Adrenal gland (tissue), 19 donors: ENCODE measurements at regions of chr11 and their contacts with region 1.

Region 1: DNA sequence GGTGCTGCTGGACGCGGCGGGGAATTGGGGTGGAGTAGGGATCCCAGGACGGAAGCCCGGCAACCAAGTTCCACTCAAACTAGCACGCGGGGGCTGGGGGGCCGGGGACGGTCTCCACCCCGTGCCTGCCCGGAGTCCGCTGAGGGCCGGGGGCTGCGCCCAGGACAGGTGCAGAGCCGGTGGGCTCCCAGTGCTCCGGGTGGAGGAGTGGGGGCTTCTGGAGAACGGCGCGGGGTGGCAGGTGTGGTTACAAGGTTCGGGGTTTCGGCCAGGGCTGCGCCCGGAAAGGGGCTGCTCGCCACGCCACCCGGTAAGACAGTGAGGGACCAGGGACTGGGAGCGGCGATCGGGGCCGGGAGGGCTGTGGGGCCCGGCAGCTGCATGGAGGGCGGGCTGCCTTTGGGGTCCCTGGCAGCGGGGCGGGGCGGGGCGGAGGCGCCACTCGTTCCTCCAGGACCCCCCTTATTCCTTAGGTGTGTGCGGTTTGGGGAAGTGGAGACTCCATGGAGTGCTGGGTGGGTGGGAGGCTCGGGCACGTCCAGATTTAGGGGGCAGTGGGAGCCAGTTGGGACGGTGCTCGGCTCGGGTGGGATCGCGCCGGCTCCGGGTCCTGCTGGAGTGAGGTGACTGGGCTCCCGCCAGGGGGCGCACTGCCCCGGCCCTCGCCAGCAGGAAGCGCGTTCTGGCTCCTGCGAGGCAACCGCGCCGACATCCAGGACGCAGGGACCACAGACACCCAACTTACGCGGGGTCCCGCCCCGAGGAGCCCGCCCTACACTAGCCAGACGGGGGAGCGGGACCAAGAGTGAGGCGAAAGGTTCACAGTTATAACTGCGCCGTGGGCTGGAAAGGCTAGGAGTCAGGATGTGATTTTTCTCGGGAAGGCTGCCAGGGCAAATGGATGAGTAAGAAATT is 868 bp downstream of the TSPAN18 start:
- DNase-seq: peak; percentile 81 to 91 (median 88)
- H3K4me3 ChIP-seq: peak overlapping the region in 3 of 4 donors; percentile 73 to 88 (median 74)
- H3K27ac ChIP-seq: peak overlapping the region in 3 of 5 donors; percentile 81 to 96 (median 91)
- H3K4me1 ChIP-seq: peaks cover 46 to 47% of the 10 kb centered on the region in 2 donors
- H3K27me3 ChIP-seq: no peaks in the 10 kb centered on the region
- CTCF ChIP-seq: peak; percentile 82 to 97 (median 94)
- POLR2A ChIP-seq: peak in 1 of 2 donors; percentile 23

Region 2: DNA sequence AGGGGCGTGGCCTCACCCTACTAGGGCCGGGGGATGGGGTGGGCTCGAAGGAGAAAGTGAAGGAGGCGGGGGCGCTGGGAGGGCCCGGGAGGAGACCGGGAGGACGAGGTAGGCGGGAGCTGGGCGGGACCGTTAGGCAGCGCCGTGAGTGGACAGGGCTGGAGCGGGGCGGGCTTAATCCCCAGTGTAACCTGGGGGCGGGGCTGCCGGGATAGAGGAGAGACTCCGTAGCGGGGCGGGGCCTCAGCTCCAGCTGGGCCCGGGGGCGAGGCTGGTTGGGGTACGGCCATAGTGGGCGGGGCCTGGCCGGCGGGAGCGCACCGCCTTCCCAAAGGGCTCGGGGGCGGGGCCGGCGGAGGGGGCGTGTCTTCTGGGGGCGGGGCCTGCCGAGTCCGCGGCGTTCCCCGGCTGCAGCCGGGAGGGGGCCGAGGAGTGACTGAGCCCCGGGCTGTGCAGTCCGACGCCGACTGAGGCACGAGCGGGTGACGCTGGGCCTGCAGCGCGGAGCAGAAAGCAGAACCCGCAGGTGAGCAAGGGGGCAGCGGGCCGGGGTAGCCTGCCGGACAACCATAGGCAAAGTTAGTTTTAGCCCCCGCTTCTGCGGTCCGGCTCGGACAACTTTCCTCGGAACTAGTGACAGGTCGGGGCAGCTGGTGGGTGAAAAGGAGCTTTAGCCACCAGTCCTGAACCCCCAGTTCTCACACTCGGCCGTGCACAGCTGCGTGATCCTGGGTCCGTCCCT is 162.2 kb before region 1 on chr11 and contains the start of gene CD82:
- intact Hi-C with region 1: loop called in 1 of 2 experiments (anchors 10 kb)
- DNase-seq: peak; percentile 100
- H3K4me3 ChIP-seq: peak within 1 kb of the TSS in 3 of 4 donors; percentile 50 to 59 (median 54)
- H3K27ac ChIP-seq: peak within 1 kb of the TSS; percentile 94 to 99 (median 98)
- H3K4me1 ChIP-seq: peaks cover 26 to 39% of the 10 kb centered on the region in 2 donors
- H3K27me3 ChIP-seq: no peaks in the 10 kb centered on the region
- CTCF ChIP-seq: peak in 4 of 6 experiments; percentile 15 to 44 (median 22)
- POLR2A ChIP-seq: peak; percentile 63 to 89
- total RNA-seq, gene CD82: 2.3 to 38.2 (median 20.0) TPM

Region 3: GRCh38 chr11:44621140-44621681 is 106.4 kb before region 1 on chr11:
- intact Hi-C with region 1: loop called in 1 of 2 experiments (anchors 5 kb)
- DNase-seq: peak; percentile 60 to 90 (median 80)
- H3K4me3 ChIP-seq: no peak overlapping the region
- H3K27ac ChIP-seq: no peak overlapping the region
- H3K4me1 ChIP-seq: no peaks in the 10 kb centered on the region
- H3K27me3 ChIP-seq: no peaks in the 10 kb centered on the region
- CTCF ChIP-seq: peak; percentile 97 to 99 (median 98)
- POLR2A ChIP-seq: peak in 1 of 2 donors; percentile 12

Region 4: GRCh38 chr11:44775366-44775984 is 47.8 kb after region 1 on chr11:
- intact Hi-C with region 1: loop called in 1 of 2 experiments (anchors 5 kb)
- DNase-seq: peak; percentile 52 to 83 (median 72)
- H3K4me3 ChIP-seq: no peak overlapping the region
- H3K27ac ChIP-seq: peak overlapping the region in 3 of 5 donors; percentile 13 to 50 (median 21)
- H3K4me1 ChIP-seq: peaks cover 0 to 54% of the 10 kb centered on the region in 2 donors
- H3K27me3 ChIP-seq: no peaks in the 10 kb centered on the region
- CTCF ChIP-seq: peak; percentile 42 to 78 (median 66)
- POLR2A ChIP-seq: no peak

Region 5: DNA sequence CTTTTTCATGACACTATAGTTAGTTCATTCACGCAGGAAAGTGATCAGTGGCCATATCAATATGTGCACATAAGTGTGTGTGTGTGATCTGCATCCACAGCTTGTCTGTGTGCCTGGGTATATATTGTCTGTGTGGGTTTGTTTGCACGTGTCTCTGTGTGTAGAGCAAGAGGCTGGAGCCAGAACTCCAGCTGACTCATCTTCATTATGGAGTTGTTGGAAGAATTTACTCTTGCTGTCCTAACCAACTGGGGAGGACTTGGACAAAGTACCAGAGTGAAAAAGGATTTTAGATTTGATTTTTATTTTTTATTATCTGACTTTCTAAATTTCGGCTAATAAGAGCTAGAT is 159.1 kb after region 1 on chr11:
- intact Hi-C with region 1: loop called (anchors 5 kb)
- DNase-seq: peak in 3 of 7 donors; percentile 47 to 56 (median 51)
- H3K4me3 ChIP-seq: no peak overlapping the region
- H3K27ac ChIP-seq: peak overlapping the region in 2 of 5 donors; percentile 27 to 65
- H3K4me1 ChIP-seq: peaks cover 0 to 15% of the 10 kb centered on the region in 2 donors
- H3K27me3 ChIP-seq: no peaks in the 10 kb centered on the region
- CTCF ChIP-seq: no peak
- POLR2A ChIP-seq: no peak

Region 6: DNA sequence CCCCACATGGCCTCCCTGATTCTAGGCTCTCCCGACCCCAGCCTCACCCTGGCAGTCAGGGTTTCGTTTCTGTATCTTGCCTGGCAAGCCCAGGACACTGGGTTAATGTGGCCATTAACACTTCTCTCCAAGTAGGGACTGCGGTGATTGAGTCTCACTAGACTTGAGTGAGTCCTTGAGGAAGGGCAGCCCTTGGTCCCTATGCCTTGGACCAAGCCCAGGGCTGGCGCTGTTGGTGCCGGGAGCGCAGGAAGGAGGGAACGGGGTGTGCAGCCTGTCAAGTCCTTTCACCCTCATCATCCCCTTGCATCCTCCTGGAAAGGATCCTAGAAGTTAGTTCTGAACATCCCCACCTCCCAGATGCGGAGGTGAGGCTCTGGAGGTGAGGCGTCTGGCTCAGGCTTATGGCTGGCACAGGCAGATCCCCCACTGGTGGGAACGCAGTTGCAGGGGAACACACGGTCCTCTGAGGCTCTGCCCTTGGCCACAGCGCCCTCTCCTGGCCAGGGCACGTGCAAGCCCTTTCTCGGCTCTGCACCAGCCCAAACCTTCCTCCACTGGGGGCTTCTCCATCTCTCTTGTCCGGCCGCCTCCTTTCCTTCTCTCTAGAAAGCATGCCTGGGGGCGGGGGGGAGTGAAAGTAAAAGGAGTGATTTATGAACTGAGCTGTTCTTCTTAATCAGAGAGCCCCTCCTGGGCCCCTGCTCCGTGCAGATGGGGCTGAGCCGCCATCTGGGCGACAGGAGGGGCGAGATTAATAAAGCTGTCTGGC is 166.4 kb after region 1 on chr11:
- intact Hi-C with region 1: loop called (anchors 5 kb)
- DNase-seq: peak; percentile 63 to 88 (median 78)
- H3K4me3 ChIP-seq: no peak overlapping the region
- H3K27ac ChIP-seq: peak overlapping the region; percentile 18 to 78 (median 31)
- H3K4me1 ChIP-seq: peaks cover 3 to 18% of the 10 kb centered on the region in 2 donors
- H3K27me3 ChIP-seq: no peaks in the 10 kb centered on the region
- CTCF ChIP-seq: peak; percentile 69 to 94 (median 90)
- POLR2A ChIP-seq: no peak

Region 7: GRCh38 chr11:44911029-44911814 is 183.6 kb after region 1 on chr11:
- intact Hi-C with region 1: loop called in 1 of 2 experiments (anchors 5 kb)
- DNase-seq: peak; percentile 84 to 96 (median 92)
- H3K4me3 ChIP-seq: no peak overlapping the region
- H3K27ac ChIP-seq: peak overlapping the region in 1 of 5 donors; percentile 5
- H3K4me1 ChIP-seq: peaks cover 0 to 21% of the 10 kb centered on the region in 2 donors
- H3K27me3 ChIP-seq: no peaks in the 10 kb centered on the region
- CTCF ChIP-seq: peak; percentile 78 to 94 (median 86)
- POLR2A ChIP-seq: no peak

Region 8: DNA sequence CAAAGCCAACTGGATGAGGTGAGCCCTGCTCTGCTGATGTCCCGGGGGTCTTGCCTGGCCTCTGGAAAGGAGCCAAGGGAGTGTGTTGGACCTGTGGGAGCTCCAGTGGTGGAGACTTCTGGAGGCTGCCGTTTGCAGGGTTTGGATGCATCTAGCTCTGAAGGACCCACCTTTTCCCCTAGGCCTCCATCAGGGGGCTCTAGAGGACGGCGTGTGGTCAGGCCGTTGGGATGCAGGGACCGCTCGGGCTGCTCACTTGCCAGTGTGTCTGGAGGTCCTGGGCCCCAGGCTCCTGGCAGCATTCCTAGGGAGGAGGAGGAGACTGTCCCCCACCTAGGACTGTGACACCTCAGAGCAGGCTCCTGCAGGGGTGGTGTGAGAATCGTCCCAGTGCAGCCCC is 477.1 kb after region 1 on chr11:
- intact Hi-C with region 1: no loop called
- DNase-seq: no peak
- H3K4me3 ChIP-seq: no peak overlapping the region
- H3K27ac ChIP-seq: no peak overlapping the region
- H3K4me1 ChIP-seq: no peaks in the 10 kb centered on the region
- H3K27me3 ChIP-seq: no peaks in the 10 kb centered on the region
- CTCF ChIP-seq: no peak
- POLR2A ChIP-seq: no peak